ENCODE measurements at regions of chr1 and their contacts with region 1.

Region 1: DNA sequence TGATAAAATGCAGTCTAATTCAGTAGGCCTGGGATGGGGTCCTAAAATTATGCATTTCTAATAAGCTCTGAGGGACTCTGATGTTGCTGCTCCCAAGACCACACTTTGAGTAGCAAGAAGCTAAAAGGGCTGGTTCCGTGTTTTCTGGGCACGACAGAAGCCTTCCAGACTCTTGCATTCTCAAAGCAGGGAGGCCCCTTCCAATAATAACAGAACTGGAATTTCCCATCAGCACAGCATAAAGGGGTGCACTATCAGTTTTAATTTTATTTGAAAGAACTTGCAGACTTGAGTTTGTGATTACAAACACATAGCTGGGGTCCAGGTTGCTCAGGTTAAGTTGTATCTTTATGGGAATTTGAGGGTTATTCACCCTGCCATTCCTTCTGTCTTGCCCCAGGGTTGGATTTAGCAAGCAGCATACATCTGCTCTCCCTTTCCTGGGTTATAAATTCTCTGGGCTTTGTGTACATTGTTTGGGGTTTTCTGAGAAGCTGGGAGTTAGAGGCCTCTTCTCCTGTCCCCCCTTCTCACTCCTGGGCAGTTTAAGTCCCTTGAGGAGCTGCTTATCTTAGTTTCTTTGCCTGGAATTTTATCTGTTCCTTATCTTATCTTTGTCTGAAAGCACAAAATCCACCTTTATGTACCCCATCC is 94.2 kb upstream of the SLC2A1 start:
- DNase-seq: peak; percentile 82 to 89
- H3K4me3 ChIP-seq: no peak overlapping the region
- H3K4me3 Mint-ChIP-seq: peak overlapping the region; percentile 49
- H3K27ac Mint-ChIP-seq: peak overlapping the region; percentile 82
- H3K4me1 ChIP-seq: peaks cover 76% of the 10 kb centered on the region
- H3K4me1 Mint-ChIP-seq: peaks cover 62% of the 10 kb centered on the region
- H3K27me3 ChIP-seq: no peaks in the 10 kb centered on the region
- H3K27me3 Mint-ChIP-seq: no peaks in the 10 kb centered on the region
- CTCF ChIP-seq: no peak

Region 2: DNA sequence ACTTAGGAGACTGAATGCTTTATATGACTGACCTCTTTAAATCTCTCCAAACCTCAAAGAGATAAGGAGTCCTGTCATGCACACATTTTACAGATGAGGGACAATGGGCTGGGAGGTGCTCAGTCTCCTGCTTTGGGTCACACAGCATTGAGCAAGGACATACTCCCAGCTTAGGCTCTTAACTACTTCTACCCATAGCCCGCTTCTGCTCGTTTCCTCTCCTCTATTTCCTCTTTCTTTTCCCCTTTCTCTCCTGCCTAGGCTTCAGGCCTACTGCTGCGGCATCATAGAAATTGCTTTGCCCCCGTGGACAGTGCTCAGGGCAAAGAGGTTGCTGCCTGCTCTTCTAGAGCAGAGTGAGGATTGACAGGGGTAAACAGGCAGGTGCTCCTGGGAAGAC is 218.9 kb before region 1 on chr1:
- CTCF ChIA-PET with region 1: no interaction called
- POLR2A ChIA-PET with region 1: no interaction called
- intact Hi-C with region 1: no loop called
- DNase-seq: no peak
- H3K4me3 ChIP-seq: no peak overlapping the region
- H3K4me3 Mint-ChIP-seq: no peak overlapping the region
- H3K27ac Mint-ChIP-seq: no peak overlapping the region
- H3K4me1 ChIP-seq: no peaks in the 10 kb centered on the region
- H3K4me1 Mint-ChIP-seq: no peaks in the 10 kb centered on the region
- H3K27me3 ChIP-seq: no peaks in the 10 kb centered on the region
- H3K27me3 Mint-ChIP-seq: no peaks in the 10 kb centered on the region
- CTCF ChIP-seq: no peak

Region 3: GRCh38 chr1:42958488-42959319 is 94.2 kb before region 1 on chr1 and contains the start of gene SLC2A1:
- CTCF ChIA-PET with region 1: no interaction called
- POLR2A ChIA-PET with region 1: no interaction called
- intact Hi-C with region 1: loop called (anchors 2 kb)
- DNase-seq: peak; percentile 94 to 96
- H3K4me3 ChIP-seq: peak within 1 kb of the TSS; percentile 95
- H3K4me3 Mint-ChIP-seq: peak within 1 kb of the TSS; percentile 93
- H3K27ac Mint-ChIP-seq: peak within 1 kb of the TSS; percentile 93
- H3K4me1 ChIP-seq: peaks cover 54% of the 10 kb centered on the region
- H3K4me1 Mint-ChIP-seq: peaks cover 41% of the 10 kb centered on the region
- H3K27me3 ChIP-seq: no peaks in the 10 kb centered on the region
- H3K27me3 Mint-ChIP-seq: no peaks in the 10 kb centered on the region
- CTCF ChIP-seq: no peak
- total RNA-seq, gene SLC2A1: 422 and 437 TPM in 2 replicates

Region 4: GRCh38 chr1:42965378-42965777 is 87.5 kb before region 1 on chr1:
- CTCF ChIA-PET with region 1: no interaction called
- POLR2A ChIA-PET with region 1: no interaction called
- intact Hi-C with region 1: loop called (anchors 1 kb)
- DNase-seq: peak in 1 of 2 experiments; percentile 59
- H3K4me3 ChIP-seq: no peak overlapping the region
- H3K4me3 Mint-ChIP-seq: no peak overlapping the region
- H3K27ac Mint-ChIP-seq: no peak overlapping the region
- H3K4me1 ChIP-seq: peaks cover 63% of the 10 kb centered on the region
- H3K4me1 Mint-ChIP-seq: peaks cover 35% of the 10 kb centered on the region
- H3K27me3 ChIP-seq: no peaks in the 10 kb centered on the region
- H3K27me3 Mint-ChIP-seq: no peaks in the 10 kb centered on the region
- CTCF ChIP-seq: no peak

Region 5: DNA sequence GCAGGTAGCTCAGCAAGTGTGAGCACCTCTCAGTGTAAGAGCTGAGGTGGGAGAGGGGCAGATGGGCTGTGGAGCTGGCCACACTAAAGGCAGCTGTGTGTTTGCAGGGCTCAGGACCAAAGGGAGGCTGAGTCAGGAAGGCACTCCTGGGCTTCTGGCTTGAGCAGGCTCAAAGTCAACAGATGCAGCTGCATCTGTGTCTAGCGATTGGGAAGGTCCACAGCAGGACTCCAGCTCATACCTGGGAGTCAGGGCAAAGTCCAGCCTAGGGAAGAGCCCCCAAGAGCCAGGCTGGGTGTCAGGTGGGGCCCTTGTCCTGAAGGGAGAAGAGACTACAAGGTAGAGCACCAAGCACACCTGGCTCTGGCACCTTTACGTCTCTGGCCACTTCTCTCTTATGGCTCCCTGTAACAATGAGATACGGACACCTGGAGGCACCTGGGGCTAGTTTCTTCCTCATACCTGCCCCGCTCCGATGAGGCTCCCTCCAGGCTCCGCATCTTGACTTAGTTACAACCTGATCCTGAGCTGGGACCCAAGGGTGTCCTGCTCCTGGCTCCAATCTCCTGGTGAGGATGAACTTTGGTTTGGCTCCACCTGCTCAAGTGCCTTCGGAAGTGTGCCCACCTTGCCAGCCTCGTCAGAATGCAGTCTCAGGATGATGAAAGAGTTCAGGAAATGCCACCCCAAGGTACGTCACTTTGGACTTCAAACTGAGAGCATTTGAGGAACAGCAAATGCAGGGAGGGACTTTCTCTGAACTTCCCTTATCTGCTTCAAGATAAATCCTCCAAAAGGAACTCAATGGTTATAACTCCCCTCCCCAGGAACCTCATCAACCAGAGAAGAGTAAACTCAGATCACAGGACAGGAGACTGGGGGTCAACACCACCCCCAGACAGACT is 72.8 kb before region 1 on chr1:
- CTCF ChIA-PET with region 1: no interaction called
- POLR2A ChIA-PET with region 1: no interaction called
- intact Hi-C with region 1: loop called (anchors 1 kb)
- DNase-seq: peak; percentile 77 to 87
- H3K4me3 ChIP-seq: peak overlapping the region; percentile 17
- H3K4me3 Mint-ChIP-seq: peak overlapping the region; percentile 78
- H3K27ac Mint-ChIP-seq: peak overlapping the region; percentile 98
- H3K4me1 ChIP-seq: peaks cover 55% of the 10 kb centered on the region
- H3K4me1 Mint-ChIP-seq: peaks cover 48% of the 10 kb centered on the region
- H3K27me3 ChIP-seq: no peaks in the 10 kb centered on the region
- H3K27me3 Mint-ChIP-seq: no peaks in the 10 kb centered on the region
- CTCF ChIP-seq: no peak

Region 6: GRCh38 chr1:43008115-43009060 is 44.5 kb before region 1 on chr1:
- CTCF ChIA-PET with region 1: interaction called, 3 read pairs
- POLR2A ChIA-PET with region 1: interaction called, 19 read pairs
- intact Hi-C with region 1: loop called (anchors 1 kb)
- DNase-seq: peak; percentile 96 to 99
- H3K4me3 ChIP-seq: peak overlapping the region; percentile 19
- H3K4me3 Mint-ChIP-seq: peak overlapping the region; percentile 71
- H3K27ac Mint-ChIP-seq: peak overlapping the region; percentile 99
- H3K4me1 ChIP-seq: peaks cover 86% of the 10 kb centered on the region
- H3K4me1 Mint-ChIP-seq: peaks cover 33% of the 10 kb centered on the region
- H3K27me3 ChIP-seq: no peaks in the 10 kb centered on the region
- H3K27me3 Mint-ChIP-seq: no peaks in the 10 kb centered on the region
- CTCF ChIP-seq: peak in 1 of 2 experiments; percentile 29

Region 7: DNA sequence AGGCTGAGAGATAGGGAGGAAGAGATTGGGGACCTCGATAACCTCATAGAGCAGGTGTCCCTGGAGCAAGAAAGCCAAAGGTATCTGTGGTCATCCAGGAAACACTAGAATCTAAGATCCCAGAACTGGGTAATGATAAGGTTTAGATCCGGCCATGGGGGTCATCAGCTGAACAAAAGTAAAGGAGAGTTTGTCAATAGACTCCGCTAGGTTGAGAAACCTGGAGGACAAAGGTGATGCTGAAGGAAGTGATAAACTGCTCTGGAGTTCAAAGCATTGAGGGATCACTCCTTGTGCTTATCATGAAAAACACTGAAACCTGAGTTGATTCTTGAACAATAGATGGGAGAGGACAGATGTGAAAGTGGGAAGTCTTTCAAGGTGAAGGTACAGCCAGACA is 34.8 kb before region 1 on chr1:
- CTCF ChIA-PET with region 1: no interaction called
- POLR2A ChIA-PET with region 1: no interaction called
- intact Hi-C with region 1: loop called (anchors 1 kb)
- DNase-seq: peak; percentile 78 to 82
- H3K4me3 ChIP-seq: no peak overlapping the region
- H3K4me3 Mint-ChIP-seq: peak overlapping the region; percentile 7
- H3K27ac Mint-ChIP-seq: peak overlapping the region; percentile 63
- H3K4me1 ChIP-seq: peaks cover 39% of the 10 kb centered on the region
- H3K4me1 Mint-ChIP-seq: peaks cover 29% of the 10 kb centered on the region
- H3K27me3 ChIP-seq: no peaks in the 10 kb centered on the region
- H3K27me3 Mint-ChIP-seq: no peaks in the 10 kb centered on the region
- CTCF ChIP-seq: no peak

Region 8: GRCh38 chr1:43039228-43040055 is 13.5 kb before region 1 on chr1:
- CTCF ChIA-PET with region 1: interaction called, 3 read pairs
- POLR2A ChIA-PET with region 1: no interaction called
- intact Hi-C with region 1: loop called (anchors 1 kb)
- DNase-seq: peak; percentile 70 to 85
- H3K4me3 ChIP-seq: no peak overlapping the region
- H3K4me3 Mint-ChIP-seq: no peak overlapping the region
- H3K27ac Mint-ChIP-seq: peak overlapping the region; percentile 81
- H3K4me1 ChIP-seq: peaks cover 73% of the 10 kb centered on the region
- H3K4me1 Mint-ChIP-seq: peaks cover 33% of the 10 kb centered on the region
- H3K27me3 ChIP-seq: no peaks in the 10 kb centered on the region
- H3K27me3 Mint-ChIP-seq: no peaks in the 10 kb centered on the region
- CTCF ChIP-seq: no peak

Region 9: DNA sequence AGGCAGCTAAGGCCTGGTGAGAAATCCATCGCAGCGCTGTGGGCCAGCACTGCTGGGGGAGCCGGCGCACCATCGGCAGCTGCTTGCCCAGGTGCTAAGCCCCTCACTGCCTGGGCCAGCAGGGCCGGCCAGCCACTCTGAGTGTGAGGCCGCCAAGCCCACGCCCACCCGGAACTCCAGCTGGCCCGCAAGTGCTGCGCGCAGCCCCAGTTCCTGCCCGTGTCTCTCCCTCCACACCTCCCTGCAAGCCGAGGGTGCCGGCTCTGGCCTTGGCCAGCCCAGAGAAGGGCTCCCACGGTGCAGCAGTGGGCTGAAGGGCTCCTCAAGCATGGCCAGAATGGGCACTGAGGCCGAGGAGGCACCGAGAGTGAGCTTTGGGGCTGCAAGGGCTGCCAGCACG is 54.8 kb after region 1 on chr1:
- CTCF ChIA-PET with region 1: no interaction called
- POLR2A ChIA-PET with region 1: no interaction called
- intact Hi-C with region 1: no loop called
- DNase-seq: no peak
- H3K4me3 ChIP-seq: no peak overlapping the region
- H3K4me3 Mint-ChIP-seq: no peak overlapping the region
- H3K27ac Mint-ChIP-seq: no peak overlapping the region
- H3K4me1 ChIP-seq: no peaks in the 10 kb centered on the region
- H3K4me1 Mint-ChIP-seq: no peaks in the 10 kb centered on the region
- H3K27me3 ChIP-seq: no peaks in the 10 kb centered on the region
- H3K27me3 Mint-ChIP-seq: no peaks in the 10 kb centered on the region
- CTCF ChIP-seq: no peak

Measured in Caco-2 (cell line).